Ascending aorta (tissue), 2 donors: ENCODE measurements at regions of chr16 and their contacts with region 1.

Region 1: DNA sequence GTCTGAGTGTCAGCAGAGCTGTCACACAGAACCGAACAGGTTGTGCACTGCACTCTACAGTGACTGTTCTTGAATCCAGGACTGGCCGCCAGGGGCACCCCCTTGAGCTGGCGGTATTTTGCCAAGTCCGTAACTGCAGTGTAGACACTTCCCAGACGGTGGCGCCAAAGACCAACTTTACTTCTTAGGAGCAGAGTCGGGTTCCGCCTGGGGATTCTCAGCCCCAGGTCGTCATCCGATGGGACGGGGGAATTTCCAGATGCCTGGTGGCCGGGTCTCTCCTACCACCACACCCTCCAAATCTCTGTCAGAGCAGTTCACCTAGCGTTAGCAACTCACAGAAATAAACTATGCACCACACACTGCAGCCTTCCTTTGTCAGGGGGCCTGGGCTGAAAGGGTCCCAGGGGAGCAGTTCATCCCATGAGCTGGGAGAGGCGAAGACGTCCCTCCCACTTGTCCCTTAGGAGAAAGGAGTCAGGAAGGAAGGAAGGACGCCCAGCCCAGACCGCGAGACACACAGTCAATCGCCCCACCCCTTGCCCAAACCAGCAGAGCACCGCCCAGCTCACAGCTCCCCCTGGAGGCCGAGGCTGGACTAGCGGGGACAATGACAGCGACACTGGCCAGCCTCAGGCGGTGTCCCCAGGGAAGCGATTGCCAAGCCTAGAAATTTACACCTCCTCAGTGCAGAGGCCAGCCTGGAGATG is 7.4 kb upstream of the RIPOR1 start:
- DNase-seq: peak; percentile 79 to 99
- H3K4me3 ChIP-seq: peak overlapping the region; percentile 55 to 63
- H3K27ac ChIP-seq: peak overlapping the region; percentile 84 to 96
- H3K4me1 ChIP-seq: peaks cover 0 to 5% of the 10 kb centered on the region in 2 donors
- H3K27me3 ChIP-seq: no peaks in the 10 kb centered on the region
- CTCF ChIP-seq: peak; percentile 80 to 98 (median 89)

Region 2: GRCh38 chr16:67480833-67481560 is 40.3 kb before region 1 on chr16 and contains the start of gene ATP6V0D1:
- intact Hi-C with region 1: loop called (anchors 2 kb)
- DNase-seq: peak; percentile 88 to 99
- H3K4me3 ChIP-seq: peak within 1 kb of the TSS; percentile 56 to 73
- H3K27ac ChIP-seq: peak within 1 kb of the TSS; percentile 74 to 80
- H3K4me1 ChIP-seq: peaks cover 4 to 24% of the 10 kb centered on the region in 2 donors
- H3K27me3 ChIP-seq: no peaks in the 10 kb centered on the region
- CTCF ChIP-seq: peak; percentile 91 to 94 (median 93)
- total RNA-seq, gene ATP6V0D1: 64.3 TPM

Region 3: DNA sequence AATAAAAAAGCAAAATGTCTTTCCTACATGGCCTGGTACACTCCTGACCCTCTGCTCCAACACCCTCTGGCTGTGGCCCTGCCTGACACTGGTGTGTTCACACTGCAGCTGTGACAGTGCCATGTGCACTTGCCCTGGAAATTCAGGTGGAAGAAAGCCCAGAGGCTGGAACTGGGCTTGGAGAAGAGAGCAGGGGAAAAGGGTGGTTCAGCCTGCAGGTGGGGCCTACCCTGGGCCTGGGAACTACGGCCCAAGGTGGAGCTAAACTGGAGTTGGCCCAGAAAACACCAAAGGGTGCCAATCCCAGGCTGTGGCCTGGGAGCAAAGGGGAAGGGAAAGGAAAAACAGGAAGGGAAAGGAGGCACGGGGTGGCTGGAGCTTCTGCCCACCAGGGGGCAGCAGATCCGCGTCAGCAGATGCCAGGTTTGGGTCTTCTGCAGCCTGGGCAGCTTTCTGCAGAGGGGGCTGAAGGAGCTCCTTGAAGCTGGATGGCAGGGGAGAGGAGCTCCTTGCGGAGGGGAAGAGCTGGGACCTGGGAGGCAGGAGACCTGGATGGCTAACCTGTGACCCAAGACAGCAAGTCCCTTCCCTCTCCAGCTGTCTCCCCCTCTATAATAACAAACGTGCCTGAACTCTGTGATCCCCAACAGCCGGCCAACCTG is 25.6 kb after region 1 on chr16:
- intact Hi-C with region 1: loop called (anchors 1 kb)
- DNase-seq: peak in 1 of 2 donors; percentile 85
- H3K4me3 ChIP-seq: no peak overlapping the region
- H3K27ac ChIP-seq: peak overlapping the region; percentile 14 to 23
- H3K4me1 ChIP-seq: peaks cover 4 to 6% of the 10 kb centered on the region in 2 donors
- H3K27me3 ChIP-seq: no peaks in the 10 kb centered on the region
- CTCF ChIP-seq: peak; percentile 79 to 91 (median 85)

Region 4: GRCh38 chr16:67667817-67668494 is 146.7 kb after region 1 on chr16:
- intact Hi-C with region 1: loop called (anchors 1 kb)
- DNase-seq: peak; percentile 66 to 95
- H3K4me3 ChIP-seq: peak overlapping the region; percentile 88 to 97
- H3K27ac ChIP-seq: peak overlapping the region; percentile 91
- H3K4me1 ChIP-seq: peaks cover 9 to 20% of the 10 kb centered on the region in 2 donors
- H3K27me3 ChIP-seq: no peaks in the 10 kb centered on the region
- CTCF ChIP-seq: peak; percentile 90 to 92 (median 92)

Region 5: GRCh38 chr16:67968400-67969253 is 447.4 kb after region 1 on chr16 and contains the start of gene SLC12A4:
- intact Hi-C with region 1: loop called (anchors 10 kb)
- DNase-seq: peak; percentile 54 to 94
- H3K4me3 ChIP-seq: peak within 1 kb of the TSS; percentile 79 to 83
- H3K27ac ChIP-seq: peak within 1 kb of the TSS; percentile 94 to 98
- H3K4me1 ChIP-seq: peaks cover 11 to 39% of the 10 kb centered on the region in 2 donors
- H3K27me3 ChIP-seq: no peaks in the 10 kb centered on the region
- CTCF ChIP-seq: no peak
- total RNA-seq, gene SLC12A4: 83.2 TPM